Panc1 (cell line): ENCODE measurements at regions of chr19 and their contacts with region 1.

Region 1: DNA sequence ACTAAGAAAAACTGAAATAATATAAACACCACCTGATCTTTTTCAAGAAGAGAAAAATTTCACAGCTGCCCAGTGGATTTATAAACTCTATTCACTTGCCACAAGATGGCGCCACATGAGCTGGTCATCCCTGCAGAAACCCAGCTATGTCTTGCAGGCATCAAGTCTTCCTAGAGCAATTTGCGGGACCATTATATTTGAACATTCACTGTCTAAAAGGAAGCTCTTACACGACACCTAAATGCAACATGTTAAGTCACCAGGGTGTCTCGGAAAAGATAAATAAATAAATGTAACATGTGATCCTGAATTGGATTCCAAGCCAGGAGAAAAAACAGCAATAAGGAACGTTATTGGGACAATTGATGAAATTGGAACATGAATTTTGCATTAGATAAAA is 20.3 kb upstream of the AKT2 start:
- DNase-seq: peak; percentile 100
- ATAC-seq: peak; percentile 92
- H3K4me3 ChIP-seq: no peak overlapping the region
- H3K27ac ChIP-seq: no peak overlapping the region
- H3K4me1 ChIP-seq: no peaks in the 10 kb centered on the region
- H3K27me3 ChIP-seq: peaks cover 11% of the 10 kb centered on the region
- CTCF ChIP-seq: no peak

Region 2: GRCh38 chr19:38527466-38528136 is 1777.8 kb before region 1 on chr19:
- CTCF ChIA-PET with region 1: interaction called, 4 read pairs
- POLR2A ChIA-PET with region 1: no interaction called
- in situ Hi-C with region 1: loop called (anchors 10 kb)
- intact Hi-C with region 1: no loop called
- DNase-seq: no peak
- ATAC-seq: peak; percentile 20
- H3K4me3 ChIP-seq: peak overlapping the region in 1 of 2 experiments; percentile 32; a peak in 2 of 4 replicates
- H3K27ac ChIP-seq: no peak overlapping the region
- H3K4me1 ChIP-seq: peaks cover 4% of the 10 kb centered on the region; the same call in 1 of the 2 replicates
- H3K27me3 ChIP-seq: no peaks in the 10 kb centered on the region
- CTCF ChIP-seq: no peak

Region 3: DNA sequence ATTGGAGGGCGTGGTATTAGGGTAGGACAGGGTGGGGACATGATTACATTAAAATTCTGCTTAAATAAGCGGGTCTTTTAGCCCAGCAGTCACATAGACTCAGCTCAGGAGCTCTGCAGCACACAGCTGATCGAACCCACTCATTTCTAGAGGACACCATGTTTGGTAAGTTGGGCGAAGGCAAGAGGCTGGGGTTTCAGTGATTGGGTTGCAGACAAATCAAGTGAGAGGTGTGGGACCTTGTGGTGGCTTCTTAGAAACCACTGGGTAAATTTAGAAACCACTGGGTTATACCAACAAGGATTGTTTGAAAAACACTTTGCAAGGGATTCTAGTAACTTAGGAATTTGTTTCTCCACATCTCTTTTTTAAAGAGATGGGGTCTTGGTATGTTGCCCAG is 526.6 kb before region 1 on chr19 and contains the start of gene LEUTX:
- CTCF ChIA-PET with region 1: interaction called, 4 read pairs
- POLR2A ChIA-PET with region 1: no interaction called
- in situ Hi-C with region 1: loop called (anchors 5 kb)
- intact Hi-C with region 1: no loop called
- DNase-seq: no peak
- ATAC-seq: no peak
- H3K4me3 ChIP-seq: no peak within 1 kb of the TSS
- H3K27ac ChIP-seq: no peak within 1 kb of the TSS
- H3K4me1 ChIP-seq: no peaks in the 10 kb centered on the region
- H3K27me3 ChIP-seq: peaks cover 86% of the 10 kb centered on the region
- CTCF ChIP-seq: no peak
- total RNA-seq, gene LEUTX: not detected

Region 4: DNA sequence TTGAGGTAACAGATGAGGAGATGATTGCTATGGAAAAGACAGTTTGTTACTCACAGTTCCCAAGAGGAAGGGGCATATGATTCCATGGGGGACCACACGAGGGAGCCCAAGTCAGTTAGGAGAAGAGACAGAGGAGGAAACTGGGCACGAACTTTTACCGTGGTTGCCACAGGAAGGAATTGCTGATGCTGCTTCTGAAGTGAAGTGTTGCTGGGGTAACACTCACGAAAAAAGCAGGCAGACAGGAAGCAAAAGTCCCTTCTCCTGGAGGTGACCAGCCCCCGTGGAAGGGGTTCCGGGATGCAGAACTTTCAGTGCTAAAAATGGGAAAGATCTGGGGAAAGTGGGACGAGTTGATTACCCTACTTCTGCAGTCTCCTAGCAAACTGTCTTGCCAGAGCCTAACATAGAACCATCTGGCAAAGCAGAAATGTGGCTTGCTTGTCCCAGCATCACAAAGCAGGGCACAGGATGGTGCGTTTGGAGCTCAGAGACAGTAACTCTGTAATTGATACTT is 149.6 kb before region 1 on chr19:
- CTCF ChIA-PET with region 1: interaction called, 111 read pairs
- POLR2A ChIA-PET with region 1: interaction called, 3 read pairs
- in situ Hi-C with region 1: no loop called
- intact Hi-C with region 1: no loop called
- DNase-seq: peak; percentile 99
- ATAC-seq: peak; percentile 90
- H3K4me3 ChIP-seq: peak overlapping the region in 1 of 2 experiments; percentile 5; a peak in 2 of 4 replicates
- H3K27ac ChIP-seq: no peak overlapping the region
- H3K4me1 ChIP-seq: 0 out of 2 replicates have a peak, but pooled peaks cover 2% of the 10 kb centered on the region
- H3K27me3 ChIP-seq: no peaks in the 10 kb centered on the region
- CTCF ChIP-seq: no peak

Region 5: DNA sequence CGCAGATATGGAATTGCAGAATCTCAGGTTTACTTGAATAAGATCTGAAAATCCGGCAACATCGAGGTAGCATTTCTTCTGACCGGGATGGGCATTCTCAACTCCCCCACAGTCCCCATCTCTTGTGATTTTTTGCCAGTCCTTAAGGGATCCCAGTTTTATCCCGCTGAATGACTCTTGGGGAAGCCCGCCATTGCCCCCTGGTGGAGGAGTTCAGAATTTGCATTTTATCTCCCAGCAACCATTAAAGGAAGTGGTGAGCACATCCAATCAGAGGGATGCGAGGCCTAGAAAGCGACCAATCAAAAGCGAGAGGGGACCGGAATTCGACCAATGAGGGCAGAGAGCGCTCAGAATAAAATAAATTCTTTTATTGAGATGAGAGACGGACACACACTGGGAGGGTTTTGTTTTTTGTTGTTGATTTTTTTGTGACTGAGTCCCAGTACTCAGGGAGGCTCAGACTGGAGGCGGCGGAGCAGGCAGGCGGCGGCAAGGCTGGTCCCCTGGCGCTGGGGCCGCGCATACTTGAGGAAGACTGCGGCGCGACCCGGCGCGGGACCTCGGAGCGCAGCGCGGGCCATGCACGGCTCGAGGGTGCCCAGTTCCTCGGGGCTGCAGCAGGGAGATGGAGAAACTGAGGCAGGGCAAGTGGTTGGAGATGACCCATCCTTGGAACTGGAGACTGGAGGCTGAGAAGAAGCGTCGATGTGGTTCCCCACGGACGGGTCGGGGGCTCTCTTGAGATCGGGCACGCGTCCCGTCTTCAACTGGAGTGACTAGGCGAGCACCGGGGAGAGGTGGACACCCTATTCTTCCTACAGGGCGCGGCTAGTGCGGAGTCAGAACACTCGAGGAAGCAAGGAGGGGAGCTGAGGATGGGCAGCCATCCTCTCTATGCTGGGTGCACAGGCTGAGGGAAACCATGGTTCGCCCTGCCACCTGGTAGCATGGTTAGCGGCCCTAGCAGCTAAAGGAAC is 83.3 kb before region 1 on chr19:
- CTCF ChIA-PET with region 1: interaction called, 56 read pairs
- POLR2A ChIA-PET with region 1: interaction called, 14 read pairs
- in situ Hi-C with region 1: no loop called
- intact Hi-C with region 1: loop called (anchors 1 kb)
- DNase-seq: peak; percentile 100
- ATAC-seq: peak; percentile 23
- H3K4me3 ChIP-seq: no peak overlapping the region
- H3K27ac ChIP-seq: no peak overlapping the region
- H3K4me1 ChIP-seq: peaks cover 39% of the 10 kb centered on the region
- H3K27me3 ChIP-seq: peaks cover 26% of the 10 kb centered on the region
- CTCF ChIP-seq: no peak

Region 6: DNA sequence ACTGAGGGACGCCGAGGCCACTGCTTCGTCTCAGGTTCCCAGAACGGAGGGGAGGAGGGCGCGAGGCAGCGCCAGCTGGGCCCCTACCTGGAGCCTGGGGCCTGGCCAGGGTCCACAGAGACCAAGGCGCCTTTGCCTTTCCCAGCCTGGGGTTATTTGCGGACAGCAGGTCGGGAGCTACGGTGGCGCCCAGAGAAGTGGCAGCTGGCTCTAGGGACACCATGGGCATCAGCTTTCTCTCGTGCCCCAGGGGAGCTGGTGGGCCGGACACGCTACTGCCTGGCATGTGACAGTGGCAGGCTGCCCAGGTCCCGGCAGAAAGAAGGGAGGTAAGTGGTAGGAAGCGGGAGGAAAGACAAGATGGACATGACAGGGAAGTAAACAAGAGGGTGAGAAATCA is 39.3 kb before region 1 on chr19:
- CTCF ChIA-PET with region 1: interaction called, 68 read pairs
- POLR2A ChIA-PET with region 1: interaction called, 6 read pairs
- in situ Hi-C with region 1: loop called (anchors 5 kb)
- intact Hi-C with region 1: no loop called
- DNase-seq: no peak
- ATAC-seq: no peak
- H3K4me3 ChIP-seq: no peak overlapping the region
- H3K27ac ChIP-seq: no peak overlapping the region
- H3K4me1 ChIP-seq: no peaks in the 10 kb centered on the region
- H3K27me3 ChIP-seq: no peaks in the 10 kb centered on the region
- CTCF ChIP-seq: no peak

Region 7: GRCh38 chr19:40331069-40331468 is 25.7 kb after region 1 on chr19:
- CTCF ChIA-PET with region 1: interaction called, 498 read pairs
- POLR2A ChIA-PET with region 1: interaction called, 19 read pairs
- in situ Hi-C with region 1: no loop called
- intact Hi-C with region 1: loop called (anchors 2 kb)
- DNase-seq: no peak
- ATAC-seq: no peak
- H3K4me3 ChIP-seq: no peak overlapping the region
- H3K27ac ChIP-seq: no peak overlapping the region
- H3K4me1 ChIP-seq: no peaks in the 10 kb centered on the region
- H3K27me3 ChIP-seq: no peaks in the 10 kb centered on the region
- CTCF ChIP-seq: no peak

Region 8: DNA sequence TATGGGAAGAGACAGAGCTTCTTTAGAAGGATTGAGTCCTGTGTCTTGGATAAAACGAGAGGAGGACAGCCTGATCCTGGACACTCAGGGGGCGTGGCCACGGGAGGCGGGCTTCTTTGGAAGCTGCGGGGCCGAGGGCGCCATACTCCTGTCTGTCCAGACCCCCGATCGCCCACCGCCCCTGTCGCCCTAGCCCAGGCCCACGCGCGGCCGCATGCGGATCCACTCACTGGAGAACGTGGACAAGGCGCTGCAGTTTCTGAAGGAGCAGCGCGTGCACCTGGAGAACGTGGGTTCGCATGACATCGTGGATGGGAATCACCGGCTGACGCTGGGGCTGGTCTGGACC is 184.5 kb after region 1 on chr19:
- CTCF ChIA-PET with region 1: no interaction called
- POLR2A ChIA-PET with region 1: no interaction called
- in situ Hi-C with region 1: no loop called
- intact Hi-C with region 1: no loop called
- DNase-seq: no peak
- ATAC-seq: no peak
- H3K4me3 ChIP-seq: no peak overlapping the region
- H3K27ac ChIP-seq: no peak overlapping the region
- H3K4me1 ChIP-seq: no peaks in the 10 kb centered on the region
- H3K27me3 ChIP-seq: no peaks in the 10 kb centered on the region
- CTCF ChIP-seq: no peak